Calu3 (cell line): ENCODE measurements at regions of chr7 and their contacts with region 1.

Region 1: DNA sequence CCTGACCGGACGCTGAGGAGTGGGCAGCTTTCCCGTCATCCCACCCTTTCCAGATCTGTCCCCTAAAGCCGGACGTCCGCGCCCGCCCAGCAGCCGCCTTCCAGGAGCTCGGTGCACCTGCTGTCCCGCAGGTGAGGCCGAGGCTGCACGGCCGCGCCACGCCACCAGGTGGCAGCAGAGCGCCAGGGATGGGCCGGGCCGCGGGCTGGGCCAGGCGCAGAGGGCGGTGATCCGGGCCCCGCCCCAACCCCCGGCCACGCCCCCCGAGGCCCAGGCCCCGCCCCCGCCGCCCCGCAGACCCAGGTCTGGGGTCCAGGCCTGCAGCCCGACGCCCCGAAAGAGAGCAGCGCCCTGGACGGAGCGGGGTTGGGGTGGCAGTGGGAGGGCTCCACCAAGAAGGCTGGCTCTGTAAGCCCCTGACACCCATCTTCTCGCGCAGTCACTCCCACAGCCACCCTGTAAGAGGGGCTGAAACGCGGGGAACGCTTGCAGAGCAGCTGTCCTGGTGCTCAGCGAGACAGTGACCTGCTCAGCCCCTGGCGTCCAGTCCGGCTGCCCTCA is 32.2 kb downstream of the FOXL3 start:
- DNase-seq: peak; percentile 96
- H3K4me3 Mint-ChIP-seq: no peak overlapping the region
- H3K27ac Mint-ChIP-seq: no peak overlapping the region
- H3K4me1 Mint-ChIP-seq: peaks cover 26% of the 10 kb centered on the region
- H3K27me3 Mint-ChIP-seq: peaks cover 82% of the 10 kb centered on the region
- CTCF ChIP-seq: peak; percentile 99

Region 2: DNA sequence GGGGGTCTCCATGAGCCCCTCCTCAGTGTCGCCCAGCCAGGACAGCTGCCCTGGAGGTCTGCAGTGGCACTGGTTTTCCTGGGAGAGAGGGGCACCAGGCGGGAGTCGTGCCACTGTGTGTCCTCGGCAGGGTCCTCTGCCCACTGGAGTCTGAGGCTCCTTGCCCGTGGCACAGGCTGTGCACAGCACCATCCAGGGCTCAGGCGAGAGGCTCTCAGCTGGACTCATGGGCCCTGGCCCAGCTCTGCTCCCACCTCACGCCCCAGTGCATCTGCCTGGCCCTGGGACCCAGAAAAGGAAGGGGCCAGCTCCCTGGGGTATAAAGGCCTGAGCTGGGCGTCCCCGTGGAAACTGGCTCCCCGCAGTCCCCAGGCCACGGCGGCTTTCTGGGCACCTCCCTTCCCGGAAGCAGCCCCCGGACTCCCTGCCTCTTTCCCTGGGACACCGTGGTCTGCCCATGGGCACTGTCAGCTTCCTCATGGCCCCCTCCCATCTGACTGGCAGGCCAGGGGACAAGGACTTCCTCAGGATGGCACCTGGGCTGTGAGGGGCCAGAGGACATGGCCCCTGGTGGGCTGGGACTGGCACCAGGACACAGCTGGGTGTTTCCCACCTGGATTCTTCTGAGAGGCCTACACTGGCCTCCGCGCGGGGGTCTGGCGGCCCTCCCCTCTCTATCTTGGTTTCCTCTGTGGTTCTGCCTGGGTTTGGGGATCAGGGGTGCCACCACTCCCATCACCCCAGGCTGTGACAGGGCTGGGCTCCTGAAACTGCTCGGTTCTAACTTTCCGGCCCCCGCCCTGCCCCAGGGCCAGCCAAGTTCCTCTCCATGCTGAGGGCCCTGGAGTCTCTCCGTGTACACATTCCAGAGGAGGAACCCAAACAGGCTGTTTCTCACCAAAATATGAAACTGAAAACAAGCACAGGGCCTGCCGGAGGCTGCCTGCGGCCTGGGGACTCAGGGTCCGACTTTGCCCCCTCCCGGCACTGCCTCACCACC is 26.7 kb before region 1 on chr7:
- CTCF ChIA-PET with region 1: no interaction called
- intact Hi-C with region 1: no loop called
- DNase-seq: no peak
- H3K4me3 Mint-ChIP-seq: no peak overlapping the region
- H3K27ac Mint-ChIP-seq: no peak overlapping the region
- H3K4me1 Mint-ChIP-seq: no peaks in the 10 kb centered on the region
- H3K27me3 Mint-ChIP-seq: peaks cover 86% of the 10 kb centered on the region
- CTCF ChIP-seq: no peak

Region 3: GRCh38 chr7:490461-491291 is 168.5 kb after region 1 on chr7:
- CTCF ChIA-PET with region 1: no interaction called
- intact Hi-C with region 1: no loop called
- DNase-seq: no peak
- H3K4me3 Mint-ChIP-seq: no peak overlapping the region
- H3K27ac Mint-ChIP-seq: no peak overlapping the region
- H3K4me1 Mint-ChIP-seq: peaks cover 12% of the 10 kb centered on the region
- H3K27me3 Mint-ChIP-seq: peaks cover 41% of the 10 kb centered on the region
- CTCF ChIP-seq: no peak

Region 4: DNA sequence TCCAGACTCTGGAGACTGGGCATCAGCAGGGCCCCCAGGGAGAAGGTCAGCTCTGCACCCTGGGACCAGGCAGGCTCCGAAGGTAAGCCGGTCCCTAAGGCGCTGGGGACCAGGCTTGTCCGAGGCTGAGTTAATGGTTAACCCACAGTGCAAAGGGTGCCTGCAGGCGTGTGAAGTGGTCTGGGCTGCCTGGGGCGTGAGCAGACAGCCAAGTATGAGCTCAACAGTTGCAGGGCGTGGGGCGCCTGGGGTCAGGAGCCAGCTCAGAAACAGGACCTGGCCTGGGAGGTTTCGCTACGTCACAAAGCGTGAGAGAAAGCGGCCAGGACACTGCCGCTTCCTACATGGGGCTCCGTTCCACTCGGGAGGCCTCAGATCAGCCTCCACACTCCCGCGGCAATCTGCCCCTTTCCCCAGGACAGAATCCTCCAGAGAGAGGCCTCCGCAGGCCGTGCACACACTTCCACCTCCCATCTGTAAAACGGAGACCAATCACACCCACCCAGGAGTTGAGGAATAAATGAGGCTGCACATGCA is 181.5 kb after region 1 on chr7:
- CTCF ChIA-PET with region 1: interaction called, 4 read pairs
- intact Hi-C with region 1: loop called (anchors 10 kb)
- DNase-seq: peak; percentile 94
- H3K4me3 Mint-ChIP-seq: peak overlapping the region; percentile 46
- H3K27ac Mint-ChIP-seq: peak overlapping the region; percentile 84
- H3K4me1 Mint-ChIP-seq: peaks cover 36% of the 10 kb centered on the region
- H3K27me3 Mint-ChIP-seq: no peaks in the 10 kb centered on the region
- CTCF ChIP-seq: no peak

Region 5: DNA sequence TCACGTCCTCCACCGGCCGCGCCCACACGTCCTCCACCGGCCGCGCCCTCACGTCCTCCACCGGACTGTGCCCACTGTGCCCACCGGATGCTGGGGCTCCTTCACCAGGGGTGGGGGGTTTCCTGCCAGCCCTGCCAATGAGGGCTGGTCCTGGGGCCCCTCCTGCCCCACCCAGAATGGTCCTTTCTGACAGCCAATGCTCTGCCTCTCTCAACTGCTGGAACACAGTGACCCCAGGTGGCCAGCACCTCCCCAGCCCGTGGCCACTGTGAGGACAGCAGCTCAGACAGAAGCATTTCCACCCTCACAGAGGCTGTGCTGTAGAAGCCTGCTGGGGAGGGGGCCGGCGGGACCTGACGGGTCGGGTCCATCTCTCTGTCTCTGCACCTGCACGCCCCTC is 314.2 kb after region 1 on chr7:
- CTCF ChIA-PET with region 1: interaction called, 23 read pairs
- intact Hi-C with region 1: loop called (anchors 2 kb)
- DNase-seq: peak; percentile 87
- H3K4me3 Mint-ChIP-seq: peak overlapping the region; percentile 82
- H3K27ac Mint-ChIP-seq: peak overlapping the region; percentile 44
- H3K4me1 Mint-ChIP-seq: peaks cover 21% of the 10 kb centered on the region
- H3K27me3 Mint-ChIP-seq: peaks cover 23% of the 10 kb centered on the region
- CTCF ChIP-seq: peak; percentile 91

Region 6: DNA sequence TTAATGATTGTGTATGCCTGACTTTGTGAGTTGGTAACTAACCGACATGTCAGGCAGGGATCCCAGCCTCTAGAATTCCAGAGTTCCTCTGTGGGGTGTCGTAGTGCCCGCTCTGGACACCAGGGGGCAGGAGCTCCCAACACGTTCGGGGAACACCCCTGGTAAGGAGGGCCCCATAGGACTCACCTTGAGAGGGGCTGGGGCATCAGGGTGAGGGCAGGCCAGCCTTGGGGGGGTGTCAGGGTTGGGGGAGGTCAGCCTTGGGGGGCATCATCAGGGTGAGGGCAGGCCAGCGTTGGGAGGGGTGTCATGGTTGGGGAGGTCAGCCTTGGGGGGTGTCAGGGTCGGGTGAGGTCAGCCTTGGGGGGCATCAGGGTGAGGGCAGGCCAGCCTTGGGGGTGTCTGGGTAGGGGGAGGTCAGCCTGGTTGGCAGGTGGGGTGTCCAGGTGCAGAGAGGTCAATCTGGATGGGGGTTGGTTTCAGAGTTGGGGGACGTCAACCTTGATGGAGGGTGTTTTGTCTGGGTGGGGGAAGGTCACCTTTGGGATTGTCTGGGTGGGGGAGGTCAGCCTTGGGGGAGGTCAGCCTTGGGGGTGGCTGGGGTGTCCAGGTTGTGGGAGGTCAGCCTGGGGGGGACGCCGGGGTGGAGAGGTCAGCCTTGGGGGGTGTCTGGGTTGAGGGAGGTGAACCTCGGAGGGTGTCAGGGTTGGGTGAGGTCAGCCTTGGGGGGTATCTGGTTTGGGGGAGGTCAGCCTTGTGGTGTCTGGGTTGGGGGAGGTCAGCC is 464.5 kb after region 1 on chr7:
- CTCF ChIA-PET with region 1: no interaction called
- intact Hi-C with region 1: loop called (anchors 5 kb)
- DNase-seq: peak; percentile 89
- H3K4me3 Mint-ChIP-seq: no peak overlapping the region
- H3K27ac Mint-ChIP-seq: no peak overlapping the region
- H3K4me1 Mint-ChIP-seq: no peaks in the 10 kb centered on the region
- H3K27me3 Mint-ChIP-seq: no peaks in the 10 kb centered on the region
- CTCF ChIP-seq: peak; percentile 94

Region 7: DNA sequence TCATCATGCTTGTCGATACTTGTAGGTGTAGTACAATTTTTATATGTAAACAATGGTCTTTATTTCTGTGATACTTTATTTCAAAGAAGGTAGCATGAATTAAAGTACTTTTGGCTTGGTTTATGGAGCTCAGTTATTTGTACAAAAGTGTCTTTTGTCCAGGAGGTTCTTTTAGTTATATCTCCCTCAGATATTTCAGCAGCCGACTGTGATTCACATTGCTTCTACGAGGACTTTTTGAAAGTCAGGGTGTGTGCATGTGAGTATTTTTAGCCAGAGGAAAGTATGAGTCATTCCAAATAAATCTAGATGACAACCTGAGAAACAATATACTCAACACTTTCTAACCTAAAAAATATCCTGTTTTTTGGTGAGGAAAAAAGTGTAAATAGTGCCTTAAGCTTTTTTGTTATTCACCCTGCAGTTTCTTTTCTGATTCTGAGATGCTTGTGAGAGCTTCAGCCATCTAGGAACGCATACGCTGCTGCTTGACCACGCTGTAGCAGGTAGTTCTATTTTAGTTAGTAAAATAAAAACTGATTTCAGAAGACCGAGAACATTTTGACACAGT is 509.5 kb after region 1 on chr7:
- CTCF ChIA-PET with region 1: interaction called, 4 read pairs
- intact Hi-C with region 1: loop called (anchors 5 kb)
- DNase-seq: peak; percentile 58
- H3K4me3 Mint-ChIP-seq: peak overlapping the region; percentile 58
- H3K27ac Mint-ChIP-seq: peak overlapping the region; percentile 91
- H3K4me1 Mint-ChIP-seq: peaks cover 56% of the 10 kb centered on the region
- H3K27me3 Mint-ChIP-seq: no peaks in the 10 kb centered on the region
- CTCF ChIP-seq: no peak

Region 8: DNA sequence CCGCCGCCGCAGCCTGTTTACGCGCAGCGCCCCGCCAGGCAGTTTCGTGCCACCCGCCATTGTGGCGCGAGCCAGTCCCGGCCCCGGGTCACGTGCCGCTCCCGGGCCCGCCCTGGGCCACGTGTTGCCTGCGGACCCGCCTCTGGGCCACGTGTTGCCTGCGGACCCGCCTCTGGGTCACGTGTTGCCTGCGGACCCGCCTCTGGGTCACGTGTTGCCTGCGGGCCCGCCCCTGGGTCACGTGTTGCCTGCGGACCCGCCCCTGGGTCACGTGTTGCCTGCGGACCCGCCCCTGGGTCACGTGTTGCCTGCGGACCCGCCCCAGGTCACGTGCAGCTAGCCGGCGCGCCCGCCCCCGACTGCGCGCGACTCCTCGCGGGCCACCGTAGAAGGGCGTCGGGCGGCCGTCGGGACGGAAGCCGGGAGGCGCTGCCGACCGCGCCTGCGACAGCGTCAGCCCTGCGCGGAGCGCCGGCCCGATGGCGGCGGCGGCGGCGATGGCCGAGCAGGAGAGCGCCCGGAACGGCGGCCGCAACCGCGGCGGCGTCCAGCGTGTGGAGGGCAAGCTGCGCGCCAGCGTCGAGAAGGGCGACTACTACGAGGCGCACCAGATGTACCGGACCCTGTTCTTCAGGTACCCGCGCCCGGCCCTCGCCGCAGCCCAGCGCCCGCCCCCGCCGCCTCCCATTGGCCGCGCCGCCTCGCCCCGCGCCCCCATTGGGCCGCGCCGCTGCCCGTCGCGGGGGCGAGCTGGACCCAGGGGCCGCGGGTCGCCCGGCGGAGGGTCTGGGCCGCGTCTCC is 554.2 kb after region 1 on chr7 and contains the start of gene GET4:
- CTCF ChIA-PET with region 1: interaction called, 7 read pairs
- intact Hi-C with region 1: loop called (anchors 10 kb)
- DNase-seq: peak; percentile 100
- H3K4me3 Mint-ChIP-seq: peak within 1 kb of the TSS; percentile 94
- H3K27ac Mint-ChIP-seq: peak within 1 kb of the TSS; percentile 98
- H3K4me1 Mint-ChIP-seq: peaks cover 19% of the 10 kb centered on the region
- H3K27me3 Mint-ChIP-seq: no peaks in the 10 kb centered on the region
- CTCF ChIP-seq: no peak
- total RNA-seq, gene GET4: 145 and 167 TPM in 2 replicates